Endothelial cell of umbilical vein (primary cell): ENCODE measurements at regions of chrX and their contacts with region 1.

Region 1: DNA sequence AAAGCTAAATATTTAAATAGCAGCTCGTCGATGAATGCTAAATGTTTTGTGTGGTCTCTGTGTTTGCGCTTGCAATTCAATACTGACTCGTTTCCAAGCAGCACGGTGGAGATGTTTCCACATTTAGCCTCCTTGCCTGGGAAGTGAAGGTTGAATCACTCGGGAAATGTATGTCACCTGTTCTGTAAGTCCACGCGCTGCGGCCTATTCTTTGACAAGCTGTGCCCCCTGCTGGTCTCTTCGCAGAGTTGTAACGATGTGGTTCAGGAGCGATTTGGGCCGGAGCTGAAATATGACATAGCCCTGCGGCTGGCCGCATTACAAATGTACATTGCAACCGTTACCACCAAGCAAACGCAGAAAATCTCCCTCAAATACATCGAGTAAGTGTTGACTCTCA is 89.6 kb upstream of the PRPS2 start:
- DNase-seq: peak; percentile 46
- H3K4me3 ChIP-seq: no peak overlapping the region
- H3K27ac ChIP-seq: no peak overlapping the region
- H3K4me1 ChIP-seq: no peaks in the 10 kb centered on the region
- H3K27me3 ChIP-seq: no peaks in the 10 kb centered on the region
- CTCF ChIP-seq: peak; percentile 54 to 58
- POLR2A ChIP-seq: no peak

Region 2: DNA sequence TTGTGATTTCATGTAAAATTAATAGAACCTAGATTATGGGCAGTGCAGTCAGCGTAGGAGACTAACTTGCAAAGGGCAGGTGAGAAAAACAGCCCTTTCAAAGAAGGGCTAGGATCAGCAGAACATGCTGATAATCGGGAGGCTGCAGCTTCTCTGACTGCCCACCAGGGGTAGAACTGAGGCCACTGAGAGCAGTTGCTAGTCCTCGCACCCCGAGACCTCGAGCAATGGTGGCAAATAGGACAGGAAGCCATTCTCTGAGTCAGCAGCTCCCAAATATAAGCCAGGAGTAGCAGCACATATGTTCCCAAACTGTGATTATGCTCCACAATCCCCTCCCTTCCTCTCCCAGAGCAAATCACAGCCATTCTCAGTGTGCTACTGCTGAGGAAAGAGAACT is 757.1 kb before region 1 on chrX:
- CTCF ChIA-PET with region 1: no interaction called
- POLR2A ChIA-PET with region 1: no interaction called
- dilution Hi-C with region 1: no loop called
- intact Hi-C with region 1: loop called (anchors 5 kb)
- DNase-seq: peak; percentile 15
- H3K4me3 ChIP-seq: no peak overlapping the region
- H3K27ac ChIP-seq: no peak overlapping the region
- H3K4me1 ChIP-seq: peaks cover 3% of the 10 kb centered on the region
- H3K27me3 ChIP-seq: no peaks in the 10 kb centered on the region
- CTCF ChIP-seq: peak; percentile 54 to 63
- POLR2A ChIP-seq: no peak

Region 3: GRCh38 chrX:12497832-12498591 is 203.6 kb before region 1 on chrX:
- CTCF ChIA-PET with region 1: interaction called, 5 read pairs
- POLR2A ChIA-PET with region 1: no interaction called
- dilution Hi-C with region 1: no loop called
- intact Hi-C with region 1: loop called (anchors 10 kb)
- DNase-seq: no peak
- H3K4me3 ChIP-seq: no peak overlapping the region
- H3K27ac ChIP-seq: no peak overlapping the region
- H3K4me1 ChIP-seq: no peaks in the 10 kb centered on the region
- H3K27me3 ChIP-seq: no peaks in the 10 kb centered on the region
- CTCF ChIP-seq: peak in 1 of 2 donors; percentile 17
- POLR2A ChIP-seq: no peak

Region 4: DNA sequence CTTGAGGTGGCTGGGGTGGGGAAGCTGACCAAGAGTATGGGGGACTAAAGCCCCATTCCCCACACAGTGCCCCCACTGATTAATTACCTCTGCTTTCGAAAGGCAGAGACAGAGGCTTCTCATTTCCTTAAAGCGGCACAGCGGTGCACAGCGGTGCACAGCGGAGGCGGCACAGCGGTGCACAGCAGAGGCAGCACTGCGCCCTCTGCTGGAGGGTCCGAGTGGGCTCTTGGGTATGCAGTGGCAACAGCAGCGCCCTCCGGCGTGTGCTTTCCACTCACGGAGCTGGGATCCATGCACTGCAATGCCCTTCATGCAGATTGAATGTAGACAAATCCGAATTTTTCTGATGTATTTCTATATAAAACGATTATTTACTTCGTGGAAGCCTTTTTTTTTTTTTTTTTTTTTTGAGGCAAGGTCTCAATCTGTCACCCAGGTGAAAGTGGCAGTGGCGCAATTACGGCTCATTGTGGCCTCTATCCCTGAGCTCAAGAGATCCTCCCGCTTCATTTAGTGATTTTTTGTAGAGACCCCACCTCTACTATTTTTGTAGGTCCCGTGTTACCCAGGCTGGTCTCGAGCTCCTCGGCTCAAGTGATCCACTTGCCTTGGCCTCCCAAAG is 69.9 kb after region 1 on chrX:
- CTCF ChIA-PET with region 1: interaction called, 18 read pairs
- POLR2A ChIA-PET with region 1: no interaction called
- dilution Hi-C with region 1: no loop called
- intact Hi-C with region 1: loop called (anchors 1 kb)
- DNase-seq: peak; percentile 33
- H3K4me3 ChIP-seq: no peak overlapping the region
- H3K27ac ChIP-seq: no peak overlapping the region
- H3K4me1 ChIP-seq: no peaks in the 10 kb centered on the region
- H3K27me3 ChIP-seq: peaks cover 1 to 3% of the 10 kb centered on the region in 2 experiments
- CTCF ChIP-seq: peak; percentile 77 to 91
- POLR2A ChIP-seq: no peak

Region 5: GRCh38 chrX:12901486-12901885 is 199.9 kb after region 1 on chrX:
- CTCF ChIA-PET with region 1: interaction called, 6 read pairs
- POLR2A ChIA-PET with region 1: no interaction called
- dilution Hi-C with region 1: no loop called
- intact Hi-C with region 1: loop called (anchors 1 kb)
- DNase-seq: peak; percentile 41
- H3K4me3 ChIP-seq: no peak overlapping the region
- H3K27ac ChIP-seq: no peak overlapping the region
- H3K4me1 ChIP-seq: no peaks in the 10 kb centered on the region
- H3K27me3 ChIP-seq: peaks cover 0 to 2% of the 10 kb centered on the region in 2 experiments
- CTCF ChIP-seq: peak; percentile 47 to 59
- POLR2A ChIP-seq: no peak

Region 6: DNA sequence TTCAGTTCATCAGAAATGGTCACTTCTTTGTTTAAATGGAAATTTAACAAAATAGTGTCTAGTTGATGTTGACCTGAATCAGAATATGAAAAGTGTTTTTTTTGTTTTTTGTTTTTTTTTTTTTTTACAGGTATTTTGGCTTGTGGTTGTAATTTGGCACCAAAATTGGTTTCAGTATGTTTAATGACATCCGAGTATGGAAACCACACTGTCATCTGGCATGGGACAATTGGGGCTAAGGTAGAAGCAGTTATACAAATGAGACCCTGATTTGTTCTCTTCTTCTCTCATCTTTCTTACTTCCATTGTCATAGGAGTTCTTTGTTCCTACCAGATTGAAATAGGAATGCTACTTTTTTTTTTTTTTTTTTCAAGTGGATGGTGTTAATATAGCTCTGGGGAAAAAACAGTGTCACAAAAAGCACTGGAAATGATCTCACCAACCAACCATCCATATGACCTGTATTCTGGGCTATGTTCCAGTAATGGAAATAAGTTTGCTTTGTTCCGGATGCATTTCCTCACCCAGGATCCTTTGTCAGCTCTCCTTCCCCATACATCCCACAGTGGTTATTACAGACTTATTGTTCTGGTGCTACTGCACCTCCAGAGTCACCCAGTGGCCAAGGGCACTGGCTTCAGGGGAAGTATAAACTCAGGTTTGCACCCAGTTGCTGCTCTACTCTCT is 522.4 kb after region 1 on chrX:
- CTCF ChIA-PET with region 1: no interaction called
- POLR2A ChIA-PET with region 1: no interaction called
- dilution Hi-C with region 1: no loop called
- intact Hi-C with region 1: no loop called
- DNase-seq: peak; percentile 91
- H3K4me3 ChIP-seq: no peak overlapping the region
- H3K27ac ChIP-seq: peak overlapping the region; percentile 87
- H3K4me1 ChIP-seq: peaks cover 16% of the 10 kb centered on the region
- H3K27me3 ChIP-seq: no peaks in the 10 kb centered on the region
- CTCF ChIP-seq: peak in 1 of 2 donors; percentile 14
- POLR2A ChIP-seq: no peak